Stomach (tissue), 19 donors: ENCODE measurements at regions of chr14 and their contacts with region 1.

Region 1: DNA sequence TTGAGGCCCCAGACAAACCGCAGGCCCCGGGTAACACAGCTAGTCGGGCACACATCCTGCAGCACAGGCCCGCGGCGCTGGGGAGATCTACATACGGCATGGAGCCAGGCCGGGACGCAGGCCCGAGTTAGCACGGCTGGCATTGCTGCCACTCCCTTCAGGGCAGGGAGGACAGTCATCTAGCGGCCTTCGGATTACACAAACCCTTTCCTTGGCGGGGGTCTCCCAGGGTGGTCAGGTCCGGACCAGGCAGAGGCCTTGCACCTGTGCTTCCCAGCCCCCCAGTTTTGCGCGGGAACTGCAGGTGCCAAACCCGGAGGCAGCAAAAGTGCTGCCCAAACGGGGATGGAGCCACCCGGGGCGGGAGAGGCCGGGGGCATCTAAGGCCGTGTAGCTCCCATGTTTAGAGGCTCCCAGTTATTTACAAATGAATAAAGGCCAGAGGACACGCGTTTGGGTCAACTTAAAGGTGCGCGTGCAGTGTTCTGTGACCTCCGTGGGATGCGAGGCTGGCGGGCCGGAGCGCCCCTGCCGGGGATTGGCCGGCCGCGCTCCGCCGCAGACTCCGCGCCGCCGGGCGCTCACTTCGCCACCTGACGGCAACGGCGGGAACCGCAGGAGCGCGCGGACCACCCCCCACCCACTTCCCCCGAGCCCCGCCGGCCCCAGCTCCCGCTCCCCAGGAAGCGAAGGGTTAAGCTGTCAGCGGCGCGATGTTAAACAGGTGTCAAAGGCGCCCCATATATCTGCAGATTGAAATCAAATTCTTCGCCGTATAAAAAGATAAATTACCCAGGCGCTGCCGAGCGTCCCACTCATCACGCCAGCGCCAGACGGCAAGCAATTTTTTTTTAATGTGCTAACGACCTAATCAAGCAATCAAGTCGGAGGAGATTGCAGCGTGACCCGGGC is 18.1 kb downstream of the VSX2 start:
- DNase-seq: peak; percentile 44 to 74
- H3K4me3 ChIP-seq: peak overlapping the region; percentile 63 to 78 (median 67)
- H3K27ac ChIP-seq: peak overlapping the region in 2 of 5 donors; percentile 14 to 20
- H3K4me1 ChIP-seq: peaks cover 14 to 21% (median 18%) of the 10 kb centered on the region in 4 donors
- H3K27me3 ChIP-seq: peaks cover 0 to 33% (median 17%) of the 10 kb centered on the region in 3 donors
- CTCF ChIP-seq: peak in 4 of 7 experiments; percentile 41 to 97 (median 96)
- EP300 ChIP-seq: no peak
- POLR2A ChIP-seq: no peak

Region 2: DNA sequence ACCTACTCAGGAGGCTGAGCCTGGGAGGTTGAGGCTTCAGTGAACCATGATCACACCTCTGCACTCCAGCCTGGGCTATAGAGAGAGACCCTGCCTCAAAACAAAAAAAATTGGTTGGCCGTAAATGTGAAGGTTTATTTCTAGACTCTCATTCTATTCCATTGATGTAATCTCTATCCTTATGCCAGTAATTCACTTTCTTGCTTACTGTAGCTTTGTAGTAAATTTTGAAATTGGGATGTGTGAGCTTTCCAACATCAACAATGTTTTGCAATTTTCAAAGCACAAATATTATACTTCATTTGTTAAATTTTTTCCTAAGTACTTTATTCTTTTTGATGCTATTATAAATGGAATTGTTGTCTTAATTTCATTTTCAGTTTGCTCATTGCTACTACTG is 148.0 kb before region 1 on chr14:
- intact Hi-C with region 1: loop called (anchors 5 kb)
- DNase-seq: no peak
- H3K4me3 ChIP-seq: no peak overlapping the region
- H3K27ac ChIP-seq: no peak overlapping the region
- H3K4me1 ChIP-seq: no peaks in the 10 kb centered on the region
- H3K27me3 ChIP-seq: no peaks in the 10 kb centered on the region
- CTCF ChIP-seq: no peak
- EP300 ChIP-seq: no peak
- POLR2A ChIP-seq: no peak